PC-3 (cell line): ENCODE measurements at regions of chr2 and their contacts with region 1.

Region 1: GRCh38 chr2:28088970-28089369 is 198.4 kb downstream of the BABAM2 start:
- DNase-seq: peak; percentile 79
- ATAC-seq: peak; percentile 95
- H3K4me3 ChIP-seq: peak overlapping the region; percentile 39
- H3K27ac ChIP-seq: no peak overlapping the region
- H3K4me1 ChIP-seq: peaks cover 28% of the 10 kb centered on the region
- H3K27me3 ChIP-seq: no peaks in the 10 kb centered on the region
- CTCF ChIP-seq: no peak

Region 2: DNA sequence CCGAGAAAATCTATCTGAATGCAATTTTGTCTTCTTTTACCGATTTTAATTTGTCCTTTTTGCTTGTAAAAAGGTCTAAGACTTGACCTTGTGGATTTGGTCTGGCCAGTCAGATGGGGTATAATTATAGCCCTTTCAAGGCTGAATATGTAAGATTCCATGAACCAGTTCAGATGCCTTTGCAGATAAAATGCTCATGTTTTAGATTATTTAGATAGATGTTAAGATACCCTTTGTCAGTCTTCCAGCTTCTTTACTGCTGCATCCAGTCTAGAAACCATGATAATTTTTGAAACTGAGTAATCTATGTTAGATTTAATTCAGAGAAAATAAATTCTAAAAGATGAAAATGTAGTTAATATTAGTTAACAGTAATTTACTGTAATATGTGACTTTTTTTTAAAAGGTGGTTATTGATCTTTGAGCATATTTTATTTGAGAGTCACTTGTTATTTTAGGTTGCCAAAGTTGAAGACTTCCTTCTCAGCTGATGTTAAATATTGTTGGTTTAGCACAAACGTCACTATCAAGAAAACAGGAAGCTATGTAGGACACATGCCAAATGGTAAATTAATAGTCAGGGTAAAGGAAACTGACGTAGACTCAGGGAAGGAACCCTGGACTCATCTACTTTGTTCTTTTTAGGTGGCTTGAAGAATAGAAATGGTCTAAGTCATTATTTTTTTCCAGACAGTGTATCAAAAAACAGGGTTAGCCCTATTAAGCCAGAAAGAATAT is 168.7 kb before region 1 on chr2:
- CTCF ChIA-PET with region 1: no interaction called
- POLR2A ChIA-PET with region 1: interaction called, 10 read pairs
- intact Hi-C with region 1: no loop called
- DNase-seq: peak; percentile 76
- ATAC-seq: peak; percentile 48
- H3K4me3 ChIP-seq: no peak overlapping the region
- H3K27ac ChIP-seq: peak overlapping the region; percentile 39
- H3K4me1 ChIP-seq: peaks cover 26% of the 10 kb centered on the region
- H3K27me3 ChIP-seq: no peaks in the 10 kb centered on the region
- CTCF ChIP-seq: no peak

Region 3: DNA sequence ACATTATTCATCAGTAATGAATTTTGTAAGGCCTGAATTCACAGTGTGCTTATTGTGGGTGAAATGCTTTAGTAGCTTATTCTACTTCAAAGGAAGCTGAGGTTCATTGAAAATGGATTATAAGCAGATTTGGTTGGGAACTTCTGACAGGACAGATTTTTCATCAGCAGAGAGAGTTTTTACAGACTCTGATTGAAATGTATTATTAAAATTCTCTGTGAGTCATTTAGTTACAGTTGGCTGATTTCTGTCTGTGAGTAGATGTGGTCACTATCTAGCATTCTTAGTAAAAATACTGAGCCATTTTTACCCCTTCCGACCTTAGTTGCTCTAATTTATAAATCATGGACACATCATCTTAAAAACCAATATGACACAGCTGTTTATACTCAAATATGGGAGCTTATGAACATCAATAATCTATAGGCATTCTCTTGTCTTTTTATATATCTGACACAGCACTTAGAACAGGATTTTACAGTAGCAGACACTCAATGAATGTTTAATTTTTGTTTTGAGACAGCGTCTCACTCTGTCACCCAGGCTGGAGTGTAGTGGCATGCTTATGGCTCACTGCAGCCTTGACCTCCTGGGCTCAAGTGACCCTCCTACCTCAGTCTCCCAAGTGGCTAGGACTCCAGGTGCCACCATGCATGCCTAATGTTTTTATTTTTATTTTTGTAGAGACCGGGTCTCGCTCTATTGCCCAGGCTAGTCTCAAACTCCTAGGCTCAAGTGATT is 41.2 kb after region 1 on chr2:
- CTCF ChIA-PET with region 1: no interaction called
- POLR2A ChIA-PET with region 1: no interaction called
- intact Hi-C with region 1: loop called (anchors 5 kb)
- DNase-seq: peak; percentile 42
- ATAC-seq: no peak
- H3K4me3 ChIP-seq: no peak overlapping the region
- H3K27ac ChIP-seq: no peak overlapping the region; the same call in 1 of the 2 replicates
- H3K4me1 ChIP-seq: peaks cover 33% of the 10 kb centered on the region
- H3K27me3 ChIP-seq: no peaks in the 10 kb centered on the region
- CTCF ChIP-seq: no peak